Gastrocnemius medialis (tissue), 4 donors: ENCODE measurements at regions of chr21 and their contacts with region 1.

Region 1: DNA sequence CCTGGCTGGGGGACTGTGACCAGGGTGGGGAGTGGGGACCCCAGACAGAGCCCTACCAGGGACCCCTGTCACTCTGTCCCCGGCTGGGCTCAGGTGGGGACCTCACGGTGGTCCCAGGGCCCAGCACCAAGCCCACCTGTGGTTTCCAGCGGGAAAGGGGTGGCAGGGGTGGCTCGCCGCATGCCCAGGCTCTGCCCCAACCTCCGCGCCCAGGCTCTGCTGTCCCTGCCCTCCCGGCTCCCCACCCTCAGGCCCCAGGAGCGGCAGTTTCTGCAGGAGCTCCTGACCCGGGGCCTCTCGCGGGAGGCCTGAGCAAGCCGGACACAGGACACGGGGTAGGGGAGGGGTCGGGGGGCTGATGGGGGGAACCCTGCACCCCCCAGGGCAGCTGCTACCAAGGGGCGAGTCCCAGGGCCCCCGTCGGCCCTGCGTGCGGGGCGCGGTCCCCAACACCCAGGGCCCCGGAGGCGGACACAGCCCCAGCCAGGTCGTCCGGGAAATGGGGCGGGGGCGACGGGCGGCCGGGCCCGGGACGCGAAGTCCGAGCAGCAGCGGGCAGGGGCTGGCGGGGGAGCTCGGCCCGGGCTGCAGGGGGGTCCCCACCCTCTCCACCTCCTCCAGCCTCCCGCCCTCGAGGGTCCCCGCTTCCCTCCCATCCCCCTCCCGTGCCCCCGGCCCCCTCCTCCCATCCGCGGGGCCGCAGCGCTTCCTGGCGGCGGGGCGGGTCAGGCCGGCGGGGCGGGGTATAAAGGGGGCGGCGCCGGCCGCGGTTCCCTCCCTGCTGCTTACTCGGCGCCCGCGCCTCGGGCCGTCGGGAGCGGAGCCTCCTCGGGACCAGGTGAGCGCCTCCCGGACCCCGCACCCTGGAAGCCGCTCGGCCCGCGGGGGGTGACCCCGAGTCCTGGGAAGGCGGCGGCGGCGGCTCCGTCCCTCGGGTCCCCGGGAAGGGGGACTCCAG is at the start of gene COL6A2:
- DNase-seq: peak in 1 of 2 donors; percentile 27
- ATAC-seq: peak; percentile 61 to 72
- H3K4me3 ChIP-seq: peak within 1 kb of the TSS; percentile 54 to 58 (median 56)
- H3K27ac ChIP-seq: peak within 1 kb of the TSS; percentile 67 to 83 (median 80)
- H3K4me1 ChIP-seq: no peaks in the 10 kb centered on the region
- H3K27me3 ChIP-seq: peaks cover 21 to 46% (median 25%) of the 10 kb centered on the region in 3 donors
- CTCF ChIP-seq: peak in 1 of 5 experiments; percentile 29
- POLR2A ChIP-seq: peak; percentile 48 to 65
- total RNA-seq, gene COL6A2: 44.0 to 141 (median 88.4) TPM

Region 2: GRCh38 chr21:45611939-45612664 is 485.5 kb before region 1 on chr21:
- in situ Hi-C with region 1: no loop called
- intact Hi-C with region 1: no loop called
- DNase-seq: no peak
- ATAC-seq: no peak
- H3K4me3 ChIP-seq: no peak overlapping the region
- H3K27ac ChIP-seq: no peak overlapping the region
- H3K4me1 ChIP-seq: no peaks in the 10 kb centered on the region
- H3K27me3 ChIP-seq: peaks cover 36 to 67% (median 55%) of the 10 kb centered on the region in 3 donors
- CTCF ChIP-seq: no peak
- POLR2A ChIP-seq: no peak

Region 3: DNA sequence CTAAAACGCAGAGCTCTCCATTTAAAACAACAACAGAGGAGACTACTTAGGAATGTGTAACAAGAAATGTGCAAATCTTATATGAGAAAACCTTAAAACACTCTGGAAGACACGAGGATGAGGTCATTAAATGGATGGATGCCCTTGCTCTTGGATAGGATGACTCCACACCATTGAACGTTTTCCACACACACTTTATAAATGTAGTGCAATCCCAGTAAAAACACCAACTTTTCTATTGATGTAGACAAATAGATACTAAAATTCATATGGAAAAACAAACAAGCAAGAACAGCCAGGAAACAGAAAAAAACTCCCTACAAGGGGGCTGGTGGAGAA is 134.4 kb before region 1 on chr21:
- in situ Hi-C with region 1: loop called in 3 of 4 experiments (anchors 10 to 25 kb)
- intact Hi-C with region 1: no loop called
- DNase-seq: no peak
- ATAC-seq: no peak
- H3K4me3 ChIP-seq: no peak overlapping the region
- H3K27ac ChIP-seq: no peak overlapping the region
- H3K4me1 ChIP-seq: peaks cover 0 to 6% of the 10 kb centered on the region in 2 donors
- H3K27me3 ChIP-seq: no peaks in the 10 kb centered on the region
- CTCF ChIP-seq: no peak
- POLR2A ChIP-seq: no peak

Region 4: GRCh38 chr21:46035809-46036695 is 61.6 kb before region 1 on chr21:
- in situ Hi-C with region 1: no loop called
- intact Hi-C with region 1: no loop called
- DNase-seq: no peak
- ATAC-seq: peak; percentile 24 to 30
- H3K4me3 ChIP-seq: no peak overlapping the region
- H3K27ac ChIP-seq: peak overlapping the region; percentile 10 to 57 (median 24)
- H3K4me1 ChIP-seq: no peaks in the 10 kb centered on the region
- H3K27me3 ChIP-seq: peaks cover 0 to 3% (median 0%) of the 10 kb centered on the region in 3 donors
- CTCF ChIP-seq: no peak
- POLR2A ChIP-seq: no peak